Naive thymus-derived CD4-positive, alpha-beta T cell (primary cell): ENCODE measurements at regions of chr12 and their contacts with region 1.

Region 1: GRCh38 chr12:14995583-14996425 is 23.0 kb downstream of the PDE6H start:
- DNase-seq: peak in 7 of 9 donors; percentile 27 to 76 (median 58)
- ATAC-seq: peak; percentile 84
- H3K4me3 ChIP-seq: no peak overlapping the region
- H3K4me3 Mint-ChIP-seq: peak overlapping the region in 8 of 10 donors; percentile 9 to 73 (median 62)
- H3K27ac ChIP-seq: peak overlapping the region; percentile 14
- H3K27ac Mint-ChIP-seq: peak overlapping the region; percentile 6 to 93 (median 88)
- H3K4me1 ChIP-seq: peaks cover 16 to 27% of the 10 kb centered on the region in 2 donors
- H3K4me1 Mint-ChIP-seq: peaks cover 21 to 35% (median 31%) of the 10 kb centered on the region in 7 donors
- H3K27me3 ChIP-seq: peaks cover 0 to 4% of the 10 kb centered on the region in 2 donors
- H3K27me3 Mint-ChIP-seq: peaks cover 0 to 32% (median 0%) of the 10 kb centered on the region in 5 donors

Region 2: DNA sequence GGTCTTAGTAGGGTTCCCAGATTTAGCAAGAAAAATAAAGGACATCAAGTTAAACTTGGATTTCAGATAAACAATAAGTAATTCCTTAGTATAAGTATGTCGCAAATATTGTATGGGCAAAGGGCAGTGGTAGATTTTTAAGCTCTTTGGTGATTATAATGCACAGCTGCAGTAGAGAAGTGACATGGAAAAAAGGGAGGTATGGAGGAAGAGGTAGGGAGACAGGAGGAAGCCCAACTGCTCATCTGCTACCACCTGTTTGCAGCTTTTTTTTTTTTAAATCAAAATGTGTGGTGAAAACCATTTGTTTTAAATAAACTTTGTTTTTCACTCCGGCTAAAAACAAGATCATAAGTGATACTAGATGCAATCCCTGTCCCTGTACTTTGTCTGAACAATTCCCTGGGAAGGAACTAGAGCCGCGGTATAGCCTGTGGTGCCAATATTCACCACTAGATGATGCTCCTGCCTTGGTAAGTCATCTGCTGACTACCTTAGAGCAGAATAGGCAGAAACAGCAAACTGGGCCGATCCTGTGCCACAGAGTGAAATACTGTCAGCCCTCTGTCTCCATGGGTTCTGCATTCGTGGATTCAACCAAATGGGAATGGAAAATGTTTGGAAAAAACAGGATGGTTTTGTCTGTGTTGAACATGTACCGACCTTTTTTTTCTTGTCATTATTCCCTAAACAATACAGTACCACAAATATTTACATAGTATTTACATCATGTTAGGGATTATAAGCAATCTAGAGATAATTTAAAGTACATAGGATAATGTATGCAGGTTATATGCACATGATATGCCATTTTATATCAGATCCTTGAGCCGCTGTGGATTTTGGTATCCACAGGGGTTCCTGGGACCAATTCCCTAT is 365.7 kb before region 1 on chr12:
- CTCF ChIA-PET with region 1: interaction called, 5 read pairs
- POLR2A ChIA-PET with region 1: no interaction called
- intact Hi-C with region 1: loop called in 1 of 2 experiments (anchors 1 kb)
- DNase-seq: peak; percentile 25 to 71 (median 55)
- ATAC-seq: peak; percentile 99
- H3K4me3 ChIP-seq: no peak overlapping the region
- H3K4me3 Mint-ChIP-seq: no peak overlapping the region
- H3K27ac ChIP-seq: no peak overlapping the region
- H3K27ac Mint-ChIP-seq: no peak overlapping the region
- H3K4me1 ChIP-seq: no peaks in the 10 kb centered on the region
- H3K4me1 Mint-ChIP-seq: no peaks in the 10 kb centered on the region
- H3K27me3 ChIP-seq: no peaks in the 10 kb centered on the region
- H3K27me3 Mint-ChIP-seq: peaks cover 0 to 35% (median 7%) of the 10 kb centered on the region in 5 donors

Region 3: DNA sequence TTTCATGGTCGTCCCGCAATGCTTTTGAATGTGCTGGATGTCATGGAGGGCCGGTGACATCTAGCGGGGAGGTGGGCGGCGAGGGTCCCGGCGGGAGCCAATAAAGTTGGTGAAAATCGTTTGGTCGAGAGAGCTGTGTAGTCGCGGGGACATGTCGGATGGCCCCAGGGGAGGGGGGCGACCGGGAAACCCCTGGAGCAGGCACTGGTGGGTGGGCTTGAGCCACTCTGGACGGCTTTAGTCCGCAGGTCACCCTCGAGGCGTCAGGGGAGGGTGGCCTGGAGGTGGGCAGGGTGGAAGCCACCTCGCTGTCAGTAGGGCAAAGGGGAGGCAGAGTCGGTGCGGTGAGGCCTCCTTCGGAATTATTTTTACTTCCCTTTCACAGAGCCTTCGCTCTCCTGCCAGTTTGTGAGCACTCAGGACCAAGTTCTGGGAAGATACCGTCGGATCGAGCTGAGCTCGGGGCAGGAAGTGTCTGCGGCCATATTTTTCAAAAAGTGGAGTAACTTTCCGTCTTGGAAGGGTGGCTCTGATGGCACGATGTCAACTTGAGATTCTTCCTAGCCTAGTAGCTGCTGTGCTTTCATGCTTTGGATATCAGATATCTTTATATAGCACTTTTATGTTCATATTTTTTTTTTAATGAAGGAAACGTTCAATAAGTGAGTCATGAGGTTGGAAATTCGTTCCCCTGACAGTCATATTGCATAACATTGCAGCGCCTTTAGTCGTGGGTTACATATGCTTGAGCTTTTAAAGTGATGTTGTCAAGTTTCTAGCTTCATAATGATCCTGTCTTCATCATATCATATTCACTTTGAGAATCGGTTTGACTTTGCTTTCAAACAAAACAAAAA is 220.7 kb before region 1 on chr12:
- CTCF ChIA-PET with region 1: interaction called, 3 read pairs
- POLR2A ChIA-PET with region 1: interaction called, 29 read pairs
- intact Hi-C with region 1: loop called (anchors 1 to 2 kb)
- DNase-seq: peak; percentile 14 to 54 (median 27)
- ATAC-seq: no peak
- H3K4me3 ChIP-seq: peak overlapping the region; percentile 79
- H3K4me3 Mint-ChIP-seq: peak overlapping the region; percentile 94 to 100 (median 100)
- H3K27ac ChIP-seq: peak overlapping the region; percentile 87
- H3K27ac Mint-ChIP-seq: peak overlapping the region; percentile 96 to 100 (median 99)
- H3K4me1 ChIP-seq: peaks cover 11 to 14% of the 10 kb centered on the region in 2 donors
- H3K4me1 Mint-ChIP-seq: peaks cover 19 to 58% (median 47%) of the 10 kb centered on the region in 7 donors
- H3K27me3 ChIP-seq: no peaks in the 10 kb centered on the region
- H3K27me3 Mint-ChIP-seq: peaks cover 0 to 10% (median 0%) of the 10 kb centered on the region in 5 donors

Region 4: DNA sequence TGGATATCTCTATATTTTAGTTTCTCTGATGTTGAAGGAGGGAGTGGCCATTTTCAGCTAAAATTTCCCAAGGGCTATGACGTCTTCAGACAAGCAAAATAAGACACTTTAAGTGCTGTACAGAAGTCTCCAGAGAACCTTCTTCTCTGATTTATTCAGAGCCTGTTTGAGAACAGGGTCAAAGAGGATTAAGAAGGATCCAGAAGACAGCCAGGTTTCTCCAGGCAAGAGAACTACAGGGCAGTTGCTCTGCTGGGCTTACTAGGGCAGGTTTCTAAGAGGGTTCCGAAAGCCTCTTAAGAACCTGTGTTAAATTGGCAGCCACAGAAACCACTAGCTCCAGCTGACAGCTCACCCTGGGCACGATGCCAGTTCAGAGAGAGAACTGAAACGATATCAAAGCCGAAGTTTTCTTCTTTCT is 111.3 kb before region 1 on chr12:
- CTCF ChIA-PET with region 1: interaction called, 8 read pairs
- POLR2A ChIA-PET with region 1: interaction called, 4 read pairs
- intact Hi-C with region 1: loop called in 1 of 2 experiments (anchors 1 kb)
- DNase-seq: peak in 8 of 9 donors; percentile 59 to 93 (median 88)
- ATAC-seq: peak; percentile 95
- H3K4me3 ChIP-seq: no peak overlapping the region
- H3K4me3 Mint-ChIP-seq: peak overlapping the region in 9 of 10 donors; percentile 62 to 83 (median 77)
- H3K27ac ChIP-seq: peak overlapping the region; percentile 60
- H3K27ac Mint-ChIP-seq: peak overlapping the region in 8 of 9 donors; percentile 49 to 95 (median 92)
- H3K4me1 ChIP-seq: peaks cover 0 to 27% of the 10 kb centered on the region in 2 donors
- H3K4me1 Mint-ChIP-seq: peaks cover 15 to 75% (median 60%) of the 10 kb centered on the region in 7 donors
- H3K27me3 ChIP-seq: no peaks in the 10 kb centered on the region
- H3K27me3 Mint-ChIP-seq: peaks cover 0 to 29% (median 8%) of the 10 kb centered on the region in 5 donors

Region 5: DNA sequence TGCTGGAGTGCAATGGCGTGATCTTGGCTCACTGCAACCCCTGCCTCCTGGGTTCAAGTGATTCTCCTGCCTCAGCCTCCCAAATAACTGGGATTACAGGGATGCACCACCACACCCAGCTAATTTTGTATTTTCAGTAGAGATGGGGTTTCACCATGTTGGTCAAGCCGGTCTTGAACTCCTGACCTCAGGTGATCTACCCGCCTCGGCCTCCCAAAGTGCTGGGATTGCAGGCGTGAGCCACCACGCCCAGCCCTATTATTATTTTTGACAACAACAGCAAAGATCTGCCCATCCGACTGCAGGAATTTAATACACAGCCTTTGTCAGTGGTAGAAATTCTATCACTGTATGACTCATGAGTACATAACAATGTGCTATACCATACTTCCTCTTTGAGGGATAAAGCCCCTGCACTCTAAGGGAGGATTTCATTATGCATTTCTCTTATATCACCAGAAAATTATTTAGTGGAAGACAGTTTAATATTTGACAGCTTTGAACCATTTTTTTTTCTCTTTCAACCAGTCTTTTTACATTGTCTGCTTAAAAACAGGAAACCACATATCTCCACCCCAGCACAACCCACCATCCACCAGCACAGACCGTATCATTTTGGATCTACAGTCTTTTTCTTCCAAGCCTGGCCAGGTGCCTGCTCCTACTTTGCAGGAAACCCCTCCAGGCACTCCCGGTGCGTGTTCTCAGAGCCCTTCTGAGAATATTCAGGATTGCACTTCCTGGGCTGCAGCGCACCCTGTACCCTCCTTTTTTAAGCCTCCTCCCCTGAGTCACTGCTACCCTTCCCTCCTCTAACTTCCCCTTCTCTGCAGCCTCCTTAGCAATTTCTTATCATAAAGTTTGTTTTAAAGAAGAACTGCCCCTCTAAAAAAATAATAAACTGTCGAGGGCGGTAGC is 35.0 kb before region 1 on chr12:
- CTCF ChIA-PET with region 1: interaction called, 11 read pairs
- POLR2A ChIA-PET with region 1: interaction called, 46 read pairs
- intact Hi-C with region 1: loop called (anchors 1 kb)
- DNase-seq: peak in 7 of 9 donors; percentile 41 to 82 (median 77)
- ATAC-seq: peak; percentile 54
- H3K4me3 ChIP-seq: peak overlapping the region; percentile 84
- H3K4me3 Mint-ChIP-seq: peak overlapping the region; percentile 88 to 100 (median 97)
- H3K27ac ChIP-seq: peak overlapping the region; percentile 96
- H3K27ac Mint-ChIP-seq: peak overlapping the region; percentile 94 to 100 (median 97)
- H3K4me1 ChIP-seq: peaks cover 42 to 50% of the 10 kb centered on the region in 2 donors
- H3K4me1 Mint-ChIP-seq: peaks cover 42 to 68% (median 61%) of the 10 kb centered on the region in 7 donors
- H3K27me3 ChIP-seq: no peaks in the 10 kb centered on the region
- H3K27me3 Mint-ChIP-seq: peaks cover 0 to 2% (median 0%) of the 10 kb centered on the region in 5 donors

Region 6: GRCh38 chr12:15116086-15116485 is 120.3 kb after region 1 on chr12:
- CTCF ChIA-PET with region 1: no interaction called
- POLR2A ChIA-PET with region 1: no interaction called
- intact Hi-C with region 1: no loop called
- DNase-seq: no peak
- ATAC-seq: no peak
- H3K4me3 ChIP-seq: no peak overlapping the region
- H3K4me3 Mint-ChIP-seq: no peak overlapping the region
- H3K27ac ChIP-seq: no peak overlapping the region
- H3K27ac Mint-ChIP-seq: no peak overlapping the region
- H3K4me1 ChIP-seq: no peaks in the 10 kb centered on the region
- H3K4me1 Mint-ChIP-seq: no peaks in the 10 kb centered on the region
- H3K27me3 ChIP-seq: no peaks in the 10 kb centered on the region
- H3K27me3 Mint-ChIP-seq: peaks cover 0 to 32% (median 20%) of the 10 kb centered on the region in 5 donors

Region 7: DNA sequence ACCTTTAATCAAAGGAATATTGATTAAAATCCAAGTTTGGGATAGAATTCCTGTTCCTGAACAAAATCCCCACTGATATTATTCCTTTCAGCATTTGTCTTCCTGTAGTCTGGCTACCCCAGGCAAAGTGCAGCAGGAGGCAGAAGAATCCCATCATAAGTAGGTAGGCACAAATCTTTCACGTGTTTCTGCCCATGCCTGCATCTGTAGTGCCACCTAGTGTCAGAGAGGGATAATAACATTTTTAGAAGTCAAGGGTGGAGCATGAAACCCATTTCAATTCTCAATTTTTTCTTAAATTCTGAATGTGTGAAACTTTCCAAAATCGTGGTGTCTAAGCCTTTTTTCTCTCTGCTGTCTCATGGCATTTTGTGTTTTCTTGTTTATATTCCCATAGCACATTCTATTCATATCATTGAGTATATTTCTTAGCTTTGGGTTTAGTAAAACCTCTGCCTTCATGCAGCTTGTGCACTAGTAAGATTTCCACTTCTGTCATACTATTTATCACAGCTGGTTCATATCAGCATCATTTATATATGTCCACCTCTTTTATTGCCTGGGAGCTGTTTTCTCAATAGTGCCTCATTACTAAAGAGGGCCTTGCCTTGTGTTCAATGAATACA is 273.2 kb after region 1 on chr12:
- CTCF ChIA-PET with region 1: no interaction called
- POLR2A ChIA-PET with region 1: no interaction called
- intact Hi-C with region 1: loop called in 1 of 2 experiments (anchors 1 kb)
- DNase-seq: peak in 7 of 9 donors; percentile 28 to 65 (median 56)
- ATAC-seq: peak; percentile 79
- H3K4me3 ChIP-seq: no peak overlapping the region
- H3K4me3 Mint-ChIP-seq: no peak overlapping the region
- H3K27ac ChIP-seq: no peak overlapping the region
- H3K27ac Mint-ChIP-seq: no peak overlapping the region
- H3K4me1 ChIP-seq: no peaks in the 10 kb centered on the region
- H3K4me1 Mint-ChIP-seq: no peaks in the 10 kb centered on the region
- H3K27me3 ChIP-seq: no peaks in the 10 kb centered on the region
- H3K27me3 Mint-ChIP-seq: peaks cover 2 to 11% (median 5%) of the 10 kb centered on the region in 5 donors